Transverse colon (tissue), 4 donors: ENCODE measurements at regions of chr12 and their contacts with region 1.

Region 1: GRCh38 chr12:15276088-15276698 is 46.1 kb upstream of the PTPRO start:
- DNase-seq: no peak
- H3K4me3 ChIP-seq: no peak overlapping the region
- H3K27ac ChIP-seq: no peak overlapping the region
- H3K4me1 ChIP-seq: peaks cover 11 to 30% (median 17%) of the 10 kb centered on the region in 4 donors
- H3K27me3 ChIP-seq: no peaks in the 10 kb centered on the region
- CTCF ChIP-seq: peak; percentile 66 to 74 (median 70)
- EP300 ChIP-seq: no peak
- POLR2A ChIP-seq: no peak

Region 2: GRCh38 chr12:15033641-15034040 is 242.6 kb before region 1 on chr12:
- in situ Hi-C with region 1: no loop called
- intact Hi-C with region 1: no loop called
- DNase-seq: no peak
- H3K4me3 ChIP-seq: no peak overlapping the region
- H3K27ac ChIP-seq: no peak overlapping the region
- H3K4me1 ChIP-seq: no peaks in the 10 kb centered on the region
- H3K27me3 ChIP-seq: no peaks in the 10 kb centered on the region
- CTCF ChIP-seq: no peak
- EP300 ChIP-seq: no peak
- POLR2A ChIP-seq: no peak

Region 3: GRCh38 chr12:15522565-15523187 is 246.5 kb after region 1 on chr12:
- in situ Hi-C with region 1: loop called (anchors 10 kb)
- intact Hi-C with region 1: loop called (anchors 10 kb)
- DNase-seq: no peak
- H3K4me3 ChIP-seq: no peak overlapping the region
- H3K27ac ChIP-seq: no peak overlapping the region
- H3K4me1 ChIP-seq: no peaks in the 10 kb centered on the region
- H3K27me3 ChIP-seq: peaks cover 4% of the 10 kb centered on the region
- CTCF ChIP-seq: peak; percentile 37 to 47 (median 40)
- EP300 ChIP-seq: no peak
- POLR2A ChIP-seq: no peak

Region 4: DNA sequence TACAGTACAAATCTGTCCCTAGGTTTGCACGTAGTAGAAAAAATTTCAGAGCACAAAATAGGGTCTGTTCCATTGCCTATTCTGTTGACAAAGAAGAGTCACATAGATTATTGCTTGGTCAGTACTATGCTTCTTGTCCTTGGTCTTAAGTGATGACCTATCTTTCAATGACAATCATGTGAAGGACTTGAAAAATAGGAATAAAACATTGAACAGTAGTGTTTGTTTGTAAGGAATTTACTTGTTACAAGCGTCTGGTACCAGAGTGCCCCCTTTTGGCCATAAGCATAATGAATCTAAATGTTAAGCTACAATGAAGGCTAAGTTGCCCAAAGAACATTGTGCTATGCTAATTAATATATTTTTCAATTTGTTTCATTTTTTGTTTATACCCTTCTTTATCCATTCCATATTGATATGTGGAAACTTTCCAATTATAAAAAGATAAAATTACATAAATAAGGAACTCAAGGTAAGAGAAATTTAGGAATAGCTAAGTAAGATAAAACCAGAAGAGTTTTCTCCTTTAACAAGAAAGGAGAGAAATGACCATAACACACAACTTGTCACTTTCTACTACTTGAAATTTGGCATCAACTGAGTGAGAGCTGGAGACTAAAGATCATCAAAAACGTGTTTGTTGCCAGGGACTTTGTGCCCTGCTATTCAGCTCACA is 308.3 kb after region 1 on chr12:
- in situ Hi-C with region 1: loop called in 2 of 4 experiments (anchors 10 kb)
- intact Hi-C with region 1: loop called (anchors 5 kb)
- DNase-seq: no peak
- H3K4me3 ChIP-seq: no peak overlapping the region
- H3K27ac ChIP-seq: no peak overlapping the region
- H3K4me1 ChIP-seq: peaks cover 0 to 25% (median 6%) of the 10 kb centered on the region in 4 donors
- H3K27me3 ChIP-seq: no peaks in the 10 kb centered on the region
- CTCF ChIP-seq: peak; percentile 61 to 72 (median 67)
- EP300 ChIP-seq: no peak
- POLR2A ChIP-seq: no peak

Region 5: GRCh38 chr12:15842108-15842507 is 565.9 kb after region 1 on chr12:
- in situ Hi-C with region 1: loop called in 1 of 4 experiments (anchors 25 kb)
- intact Hi-C with region 1: no loop called
- DNase-seq: no peak
- H3K4me3 ChIP-seq: no peak overlapping the region
- H3K27ac ChIP-seq: no peak overlapping the region
- H3K4me1 ChIP-seq: peaks cover 0 to under 1% (median 0%) of the 10 kb centered on the region in 4 donors
- H3K27me3 ChIP-seq: no peaks in the 10 kb centered on the region
- CTCF ChIP-seq: no peak
- EP300 ChIP-seq: no peak
- POLR2A ChIP-seq: no peak

Region 6: DNA sequence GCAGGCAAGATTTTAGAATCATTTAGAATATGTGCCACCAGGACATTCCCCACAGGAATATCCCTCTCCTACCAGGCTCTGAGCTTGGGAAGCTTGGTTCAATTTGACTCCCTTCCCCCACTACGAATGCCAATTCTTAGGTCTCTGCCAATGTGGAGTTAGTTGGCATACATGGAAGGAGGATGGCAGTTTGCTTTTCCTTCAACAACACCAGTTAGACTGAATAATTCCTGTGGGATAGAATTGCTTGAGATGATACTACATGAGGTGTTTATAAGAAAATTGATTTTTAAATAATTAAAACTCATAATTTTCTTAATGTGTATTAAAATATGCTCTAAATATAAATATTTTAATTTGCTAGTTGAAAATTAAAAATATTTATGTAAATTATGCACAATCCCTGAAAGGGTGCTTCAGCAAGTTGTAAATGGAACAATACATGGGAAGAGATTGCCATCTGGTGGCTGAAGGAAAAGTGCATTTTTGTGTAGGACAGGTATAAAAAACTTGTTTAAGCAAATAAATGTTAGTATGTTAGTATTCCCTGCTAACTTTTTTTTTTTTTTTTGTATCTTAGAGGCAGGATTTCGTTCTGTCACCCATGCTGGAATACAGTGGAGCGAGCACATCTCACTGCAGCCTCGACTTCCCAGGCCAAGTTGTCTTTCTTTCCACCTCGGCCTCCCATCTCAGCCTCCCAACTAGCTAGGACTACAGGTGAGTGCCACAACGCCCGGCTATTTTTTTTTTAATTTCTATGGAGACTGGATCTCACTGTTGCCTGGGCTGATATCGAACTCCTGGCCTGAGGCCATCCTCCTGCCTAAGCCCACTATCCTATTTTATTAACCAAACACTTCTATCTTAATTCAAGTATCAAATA is 580.1 kb after region 1 on chr12:
- in situ Hi-C with region 1: loop called in 2 of 4 experiments (anchors 10 kb)
- intact Hi-C with region 1: no loop called
- DNase-seq: peak; percentile 36
- H3K4me3 ChIP-seq: no peak overlapping the region
- H3K27ac ChIP-seq: no peak overlapping the region
- H3K4me1 ChIP-seq: peaks cover 0 to 10% (median 2%) of the 10 kb centered on the region in 4 donors
- H3K27me3 ChIP-seq: no peaks in the 10 kb centered on the region
- CTCF ChIP-seq: peak; percentile 78 to 94 (median 87)
- EP300 ChIP-seq: no peak
- POLR2A ChIP-seq: no peak